Posterior cingulate gyrus (tissue), 11 donors: ENCODE measurements at regions of chr22 and their contacts with region 1.

Region 1: DNA sequence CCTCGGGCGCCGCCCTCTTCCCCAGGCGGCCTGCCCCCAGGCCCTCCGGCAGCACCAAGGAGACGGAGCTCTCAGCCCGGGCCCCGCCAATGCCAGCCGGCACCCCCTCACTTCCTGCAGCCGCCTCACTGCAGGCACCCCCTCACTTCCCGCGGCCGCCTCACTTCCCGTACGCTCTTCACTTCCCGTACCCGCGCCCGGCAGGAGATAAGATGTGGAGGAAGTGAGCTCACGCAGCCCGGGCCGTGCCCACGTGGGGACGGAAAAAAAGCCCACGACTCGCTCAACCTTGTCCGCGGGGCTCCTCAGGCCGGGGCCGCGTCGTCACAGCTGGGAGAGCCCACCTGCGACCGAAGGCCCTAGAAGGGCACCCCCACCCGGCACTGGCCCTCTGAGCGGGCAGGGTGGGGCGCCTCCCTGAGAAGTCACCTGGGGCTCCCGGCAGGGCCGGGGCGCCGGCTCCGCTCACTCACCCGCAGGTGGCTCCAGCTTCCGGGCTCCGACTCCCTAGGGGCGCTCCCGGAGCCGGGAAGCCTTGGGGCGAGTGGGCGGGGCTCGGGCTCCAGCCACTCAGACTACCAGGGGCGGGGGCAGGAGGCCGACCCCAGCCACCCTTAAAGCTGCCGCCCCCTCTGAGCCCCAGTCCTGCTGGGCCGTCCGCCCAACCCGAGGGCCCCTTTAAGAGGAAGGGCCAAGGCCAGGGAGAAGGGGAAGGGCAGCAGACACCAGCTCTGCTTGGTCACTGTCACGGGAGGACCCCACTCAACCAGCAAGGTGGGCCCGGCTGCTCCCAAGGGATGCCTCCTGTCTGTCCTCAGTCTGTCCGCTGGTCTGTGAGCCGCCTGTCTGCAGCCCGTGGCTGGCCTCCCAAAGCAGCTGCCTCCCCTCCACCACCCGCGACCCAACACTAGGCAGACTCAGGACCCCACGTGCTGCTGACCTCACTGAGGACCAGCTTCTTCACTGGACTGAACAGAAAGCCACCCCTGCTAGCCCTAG is 31.4 kb downstream of the PISD start:
- DNase-seq: peak; percentile 56 to 96 (median 72)

Region 2: DNA sequence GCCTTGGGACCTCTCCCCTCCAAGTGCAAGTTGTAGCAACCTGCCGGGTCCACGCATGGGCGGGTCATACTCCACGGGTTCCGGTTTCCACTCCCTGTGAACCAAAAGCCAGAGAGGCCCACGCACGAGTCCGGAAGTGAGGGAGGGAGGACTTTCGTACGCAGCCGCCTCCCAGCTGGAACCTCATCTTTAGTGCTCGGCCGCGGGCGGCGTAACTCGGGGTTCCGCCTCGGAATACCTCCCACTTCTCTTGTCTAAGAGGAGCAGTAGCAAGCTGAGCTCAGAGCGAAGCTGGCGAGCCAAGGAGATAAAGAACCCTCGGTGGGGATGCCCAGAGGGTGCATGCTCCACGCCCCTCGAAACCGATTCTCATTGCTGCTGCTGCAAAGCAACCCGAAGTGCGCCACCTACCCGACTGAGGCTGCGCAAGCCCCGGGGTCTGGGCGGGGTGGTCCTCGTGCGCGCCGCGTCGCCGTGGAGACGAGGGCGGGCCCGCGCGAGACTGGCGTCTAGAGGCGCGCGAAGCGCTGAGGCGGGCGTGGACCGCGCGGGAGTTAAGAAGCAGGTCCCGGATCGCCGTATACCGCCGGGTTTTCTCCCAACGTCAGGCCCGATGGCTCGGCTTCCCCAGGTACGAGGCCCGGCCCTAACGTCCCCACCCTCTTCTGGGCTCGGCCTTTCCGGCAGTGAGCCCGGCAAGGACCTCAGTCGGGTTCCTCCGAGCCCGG is 134.5 kb before region 1 on chr22 and contains the start of gene SFI1:
- intact Hi-C with region 1: loop called (anchors 10 kb)
- DNase-seq: peak; percentile 91 to 99 (median 94)

Region 3: GRCh38 chr22:31526270-31526669 is 104.4 kb before region 1 on chr22:
- intact Hi-C with region 1: no loop called
- DNase-seq: no peak

Region 4: DNA sequence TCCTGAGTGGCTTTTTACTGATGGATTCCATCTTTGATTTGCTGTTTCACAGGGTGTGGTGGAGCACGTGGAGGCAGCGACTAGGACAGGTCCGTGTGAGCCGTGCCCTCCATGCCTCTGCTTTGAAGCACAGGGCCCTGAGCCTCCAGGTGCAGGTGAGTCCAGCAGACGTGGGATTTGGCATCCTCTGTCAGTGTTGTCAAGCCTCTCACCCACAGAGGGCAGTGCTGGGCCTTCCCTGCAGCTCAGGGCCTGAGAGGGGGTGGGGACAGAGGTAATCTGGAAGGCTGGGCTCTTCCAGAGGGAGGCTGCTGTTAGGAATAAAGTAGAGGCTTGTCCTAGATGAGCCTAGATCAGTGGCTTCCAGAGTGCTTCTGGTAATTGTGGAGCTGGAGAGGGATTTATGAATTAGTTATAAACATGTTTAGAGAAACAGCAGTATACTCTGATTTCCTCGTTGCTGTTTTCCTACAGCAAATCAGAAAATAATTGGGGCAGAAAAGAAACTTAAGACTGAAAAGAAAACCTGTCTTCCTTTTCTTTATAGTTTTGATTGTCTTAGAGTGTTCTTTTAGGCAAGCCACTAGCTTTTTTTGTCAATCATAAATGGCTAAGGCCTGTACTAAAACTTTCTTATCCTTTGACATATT is 69.3 kb before region 1 on chr22:
- intact Hi-C with region 1: loop called (anchors 1 kb)
- DNase-seq: peak; percentile 39 to 96 (median 76)

Region 5: DNA sequence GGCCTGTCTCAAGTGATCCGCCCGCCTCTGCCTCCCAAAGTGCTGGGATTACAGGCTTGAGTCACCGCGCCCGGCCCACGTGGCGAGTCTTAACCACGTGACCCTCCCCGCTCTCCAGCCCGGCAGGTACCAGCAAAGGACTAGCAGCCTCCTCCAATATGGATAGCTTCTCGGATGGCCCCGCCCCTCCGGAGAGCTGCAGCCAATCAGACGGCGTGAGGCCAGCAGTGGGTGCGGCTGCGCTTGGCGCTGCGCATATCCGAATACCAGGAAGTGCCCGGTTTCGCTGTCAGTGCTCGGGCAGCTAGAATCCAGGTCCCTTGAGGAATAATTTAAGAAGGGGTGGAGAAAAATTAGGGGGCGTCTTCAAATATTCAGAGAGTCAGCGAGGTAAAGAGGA is 46.1 kb after region 1 on chr22:
- intact Hi-C with region 1: no loop called
- DNase-seq: peak; percentile 81 to 99 (median 93)